ENCODE measurements at regions of chr3 and their contacts with region 1.

Region 1: GRCh38 chr3:148955544-148956346 is 35.6 kb upstream of the GYG1 start:
- DNase-seq: peak; percentile 51
- ATAC-seq: no peak
- H3K4me3 Mint-ChIP-seq: no peak overlapping the region
- H3K27ac Mint-ChIP-seq: no peak overlapping the region
- H3K4me1 Mint-ChIP-seq: peaks cover 9% of the 10 kb centered on the region
- H3K27me3 Mint-ChIP-seq: peaks cover 20% of the 10 kb centered on the region

Region 2: GRCh38 chr3:148269816-148270215 is 685.9 kb before region 1 on chr3:
- CTCF ChIA-PET with region 1: no interaction called
- POLR2A ChIA-PET with region 1: no interaction called
- DNase-seq: no peak
- ATAC-seq: no peak
- H3K4me3 Mint-ChIP-seq: no peak overlapping the region
- H3K27ac Mint-ChIP-seq: no peak overlapping the region
- H3K4me1 Mint-ChIP-seq: no peaks in the 10 kb centered on the region
- H3K27me3 Mint-ChIP-seq: no peaks in the 10 kb centered on the region

Region 3: GRCh38 chr3:148861277-148861869 is 94.4 kb before region 1 on chr3:
- CTCF ChIA-PET with region 1: interaction called, 24 read pairs
- POLR2A ChIA-PET with region 1: no interaction called
- DNase-seq: no peak
- ATAC-seq: no peak
- H3K4me3 Mint-ChIP-seq: no peak overlapping the region
- H3K27ac Mint-ChIP-seq: no peak overlapping the region
- H3K4me1 Mint-ChIP-seq: no peaks in the 10 kb centered on the region
- H3K27me3 Mint-ChIP-seq: peaks cover 9% of the 10 kb centered on the region

Region 4: DNA sequence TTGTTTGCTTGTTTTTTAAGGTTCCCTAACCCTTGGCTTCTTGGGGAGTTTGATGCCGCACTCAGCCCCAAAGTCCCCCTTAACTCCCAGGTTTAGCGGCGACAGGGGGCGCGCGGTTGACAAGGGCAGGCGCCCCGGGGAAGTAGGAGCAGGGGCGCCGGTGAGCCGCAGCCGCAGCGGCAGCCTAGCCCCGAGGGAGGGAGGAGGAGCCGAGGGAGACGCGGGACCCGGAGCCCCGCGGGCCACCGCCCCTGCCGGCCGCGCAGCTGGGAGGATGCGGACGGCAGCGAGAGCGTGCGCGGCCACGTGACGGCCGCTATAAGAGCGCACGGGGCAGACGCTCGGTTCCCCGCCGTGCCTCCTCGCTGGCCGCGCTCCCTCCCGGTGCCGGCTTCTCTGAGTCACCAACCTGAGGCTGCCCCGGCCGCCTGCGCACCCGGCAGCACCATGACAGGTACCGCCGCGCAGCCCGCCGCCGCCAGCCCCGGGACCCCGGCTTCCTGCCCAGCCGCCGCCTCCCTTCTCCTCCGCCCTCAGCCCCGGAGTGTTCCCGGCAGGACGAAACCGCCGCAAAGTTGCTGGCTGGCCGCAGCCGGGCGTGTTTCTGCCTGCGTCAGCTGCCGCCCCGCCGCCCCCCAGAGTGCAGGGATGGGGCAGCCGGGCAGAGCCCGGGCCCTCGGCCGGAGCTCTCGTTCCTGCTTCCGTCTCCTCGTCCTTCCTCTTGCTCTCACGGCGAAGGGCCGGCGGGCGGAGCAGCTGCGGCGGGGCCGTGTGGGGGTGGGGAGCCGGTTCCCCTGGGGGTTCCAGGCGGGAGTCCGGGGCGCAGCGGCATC is 35.7 kb after region 1 on chr3 and contains the start of gene GYG1:
- CTCF ChIA-PET with region 1: interaction called, 19 read pairs
- POLR2A ChIA-PET with region 1: no interaction called
- DNase-seq: peak; percentile 81
- ATAC-seq: peak; percentile 93
- H3K4me3 Mint-ChIP-seq: peak within 1 kb of the TSS; percentile 78
- H3K27ac Mint-ChIP-seq: peak within 1 kb of the TSS; percentile 86
- H3K4me1 Mint-ChIP-seq: peaks cover 44% of the 10 kb centered on the region
- H3K27me3 Mint-ChIP-seq: no peaks in the 10 kb centered on the region
- total RNA-seq, gene GYG1: 46.9 to 54.0 TPM

Region 5: GRCh38 chr3:149129326-149130205 is 173.8 kb after region 1 on chr3 and contains the start of gene HPS3:
- CTCF ChIA-PET with region 1: interaction called, 15 read pairs
- POLR2A ChIA-PET with region 1: interaction called, 5 read pairs
- DNase-seq: peak; percentile 89
- ATAC-seq: peak; percentile 94
- H3K4me3 Mint-ChIP-seq: peak within 1 kb of the TSS; percentile 89
- H3K27ac Mint-ChIP-seq: peak within 1 kb of the TSS; percentile 88
- H3K4me1 Mint-ChIP-seq: peaks cover 34% of the 10 kb centered on the region
- H3K27me3 Mint-ChIP-seq: peaks cover 7% of the 10 kb centered on the region
- total RNA-seq, gene HPS3: 26.8 to 29.0 TPM

Region 6: DNA sequence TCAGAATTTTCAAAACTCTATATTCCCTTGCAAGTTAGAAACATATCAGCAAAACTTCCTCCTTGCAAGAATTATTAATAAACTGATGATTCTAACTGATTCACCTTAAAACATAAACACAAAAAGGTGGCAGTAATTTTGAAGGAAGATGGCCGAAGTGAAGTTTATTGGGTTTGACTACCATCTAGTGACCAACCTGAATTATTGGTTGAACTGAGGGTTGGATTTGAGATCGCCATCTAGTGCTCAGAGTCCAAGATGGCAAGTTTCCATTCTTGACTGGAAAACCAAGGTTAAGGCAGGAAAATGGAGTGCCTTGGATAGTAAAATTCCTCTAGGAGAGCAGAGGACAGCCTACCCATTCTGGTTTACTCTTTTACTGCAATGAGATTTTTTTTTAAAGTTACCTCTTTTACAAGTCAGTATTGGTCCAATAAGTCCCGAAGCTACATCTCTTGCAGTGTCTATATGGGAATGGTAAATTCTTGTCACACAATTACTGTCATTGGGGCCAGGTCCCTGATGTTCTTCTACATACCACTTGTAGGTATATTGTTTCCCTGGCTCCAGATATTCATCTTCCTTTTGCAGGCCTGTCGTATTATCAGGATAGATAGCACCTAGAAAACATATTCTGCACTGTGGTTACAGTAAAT is 317.5 kb after region 1 on chr3:
- CTCF ChIA-PET with region 1: interaction called, 52 read pairs
- POLR2A ChIA-PET with region 1: no interaction called
- DNase-seq: peak; percentile 54
- ATAC-seq: peak; percentile 70
- H3K4me3 Mint-ChIP-seq: no peak overlapping the region
- H3K27ac Mint-ChIP-seq: no peak overlapping the region
- H3K4me1 Mint-ChIP-seq: peaks cover 15% of the 10 kb centered on the region
- H3K27me3 Mint-ChIP-seq: peaks cover 3% of the 10 kb centered on the region

Measured in activated CD8-positive, alpha-beta T cell treated with anti-CD3 and anti-CD28 coated beads, Interleukin-2, amount 10 ng/mL, durations not matched to agents 7 days and 5 days (primary cell).